ENCODE measurements at regions of chr6 and their contacts with region 1.

Region 1: DNA sequence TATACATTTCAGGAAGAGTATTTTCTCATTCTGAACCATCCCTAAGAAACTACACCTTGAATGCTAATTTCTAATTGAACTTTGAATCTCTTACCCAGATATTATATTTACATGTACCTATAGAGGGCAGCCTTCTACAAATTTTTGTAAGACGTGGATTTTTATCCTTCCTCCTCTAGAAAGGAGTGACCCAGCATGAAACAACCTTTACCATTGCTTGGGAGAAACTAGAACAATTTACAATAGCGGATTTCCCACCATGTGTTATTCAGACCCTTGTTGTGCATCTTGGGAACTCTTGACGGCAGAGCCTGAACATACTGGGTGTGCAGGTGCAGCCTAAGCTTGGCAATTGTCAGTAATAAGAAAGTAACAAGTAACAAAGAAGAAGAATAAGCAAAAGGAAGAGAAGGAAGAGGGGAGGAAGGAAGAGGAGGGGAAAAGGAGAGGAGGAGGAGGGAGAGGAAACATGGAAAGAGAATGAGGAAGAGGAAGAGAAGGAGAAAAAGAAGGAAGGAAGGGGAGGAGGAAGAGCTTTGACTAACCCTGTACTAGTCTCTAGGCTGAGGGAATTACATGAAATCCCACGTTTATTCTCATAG is 10.8 kb upstream of the TAAR1 start:
- DNase-seq: peak; percentile 38
- ATAC-seq: peak; percentile 92
- H3K4me3 ChIP-seq: no peak overlapping the region
- H3K27ac ChIP-seq: no peak overlapping the region
- H3K4me1 ChIP-seq: peaks cover 0 to 9% of the 10 kb centered on the region in 2 experiments; a peak in 2 of 4 replicates
- H3K27me3 ChIP-seq: no peaks in the 10 kb centered on the region
- CTCF ChIP-seq: peak; percentile 35 to 83 (median 66)
- POLR2A ChIP-seq: no peak
- RAD21 ChIP-seq: peak; percentile 77

Region 2: DNA sequence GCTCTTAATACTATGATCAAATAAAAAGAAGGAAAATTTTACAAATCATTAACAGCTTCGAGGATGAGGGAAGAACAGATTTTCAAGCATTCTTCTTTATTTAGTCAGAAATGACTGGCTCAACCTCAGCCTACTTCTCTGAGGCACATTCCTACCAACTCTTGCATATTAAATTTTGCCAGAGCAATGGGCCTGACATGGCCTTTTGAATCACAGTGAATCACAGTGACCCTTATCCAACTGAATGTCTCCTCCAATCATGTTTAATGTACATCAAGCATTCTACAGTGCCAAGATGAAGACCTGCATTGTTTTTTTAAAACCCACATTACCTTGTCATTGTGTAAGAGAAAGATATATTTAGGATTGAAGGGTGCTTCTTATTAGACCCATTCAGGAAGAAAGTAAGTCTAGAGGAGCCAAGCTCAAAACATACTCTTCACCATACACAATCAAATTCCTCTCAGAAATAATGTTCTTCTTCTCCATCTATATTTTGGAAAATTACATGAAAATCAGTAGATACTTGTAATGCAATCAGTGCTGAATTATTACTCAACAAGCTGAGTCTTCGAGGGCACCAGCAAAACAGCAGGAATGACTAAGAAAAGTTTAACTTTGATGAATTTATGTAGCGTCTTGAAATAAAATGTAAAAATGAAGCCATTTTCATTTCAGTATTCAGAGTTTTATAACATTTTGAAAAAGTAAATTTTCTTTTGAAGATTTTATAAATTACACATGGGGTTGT is 224.4 kb before region 1 on chr6:
- CTCF ChIA-PET with region 1: no interaction called
- POLR2A ChIA-PET with region 1: no interaction called
- RAD21 ChIA-PET with region 1: no interaction called
- intact Hi-C with region 1: no loop called
- DNase-seq: no peak
- ATAC-seq: no peak
- H3K4me3 ChIP-seq: no peak overlapping the region
- H3K27ac ChIP-seq: no peak overlapping the region
- H3K4me1 ChIP-seq: no peaks in the 10 kb centered on the region
- H3K27me3 ChIP-seq: no peaks in the 10 kb centered on the region
- CTCF ChIP-seq: no peak
- POLR2A ChIP-seq: no peak
- RAD21 ChIP-seq: no peak

Region 3: DNA sequence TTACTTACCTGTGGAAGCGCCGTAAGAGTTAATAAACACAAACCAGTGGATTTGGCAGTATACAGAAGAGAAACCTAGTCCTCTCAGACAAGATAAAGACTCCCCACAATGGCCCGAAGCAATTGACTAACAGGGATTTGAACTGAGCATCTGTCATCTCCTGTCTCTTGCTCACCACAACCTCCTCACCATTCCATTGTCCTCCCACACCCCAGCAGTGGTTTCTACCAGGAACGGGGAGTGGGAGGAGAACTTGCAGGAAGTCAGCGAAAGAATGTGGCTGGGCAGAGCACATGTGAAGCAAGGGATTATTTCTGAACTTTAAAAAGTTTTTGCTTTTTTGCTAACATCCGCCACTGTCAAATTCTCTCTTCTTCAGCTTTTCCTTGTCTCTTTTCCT is 13.8 kb after region 1 on chr6:
- CTCF ChIA-PET with region 1: no interaction called
- POLR2A ChIA-PET with region 1: no interaction called
- RAD21 ChIA-PET with region 1: no interaction called
- intact Hi-C with region 1: no loop called
- DNase-seq: no peak
- ATAC-seq: no peak
- H3K4me3 ChIP-seq: no peak overlapping the region
- H3K27ac ChIP-seq: no peak overlapping the region
- H3K4me1 ChIP-seq: peaks cover 0 to 6% of the 10 kb centered on the region in 2 experiments; a peak in 1 of 4 replicates
- H3K27me3 ChIP-seq: no peaks in the 10 kb centered on the region
- CTCF ChIP-seq: no peak
- POLR2A ChIP-seq: no peak
- RAD21 ChIP-seq: no peak

Region 4: GRCh38 chr6:132715204-132715603 is 45.4 kb after region 1 on chr6:
- CTCF ChIA-PET with region 1: interaction called, 4 read pairs
- POLR2A ChIA-PET with region 1: no interaction called
- RAD21 ChIA-PET with region 1: no interaction called
- intact Hi-C with region 1: loop called (anchors 1 kb)
- DNase-seq: peak; percentile 49
- ATAC-seq: peak; percentile 100
- H3K4me3 ChIP-seq: no peak overlapping the region
- H3K27ac ChIP-seq: no peak overlapping the region
- H3K4me1 ChIP-seq: no peaks in the 10 kb centered on the region; a peak in 1 of 4 replicates
- H3K27me3 ChIP-seq: no peaks in the 10 kb centered on the region
- CTCF ChIP-seq: peak; percentile 19 to 49 (median 44); a peak in 4 of 6 replicates
- POLR2A ChIP-seq: no peak
- RAD21 ChIP-seq: peak; percentile 77

Region 5: DNA sequence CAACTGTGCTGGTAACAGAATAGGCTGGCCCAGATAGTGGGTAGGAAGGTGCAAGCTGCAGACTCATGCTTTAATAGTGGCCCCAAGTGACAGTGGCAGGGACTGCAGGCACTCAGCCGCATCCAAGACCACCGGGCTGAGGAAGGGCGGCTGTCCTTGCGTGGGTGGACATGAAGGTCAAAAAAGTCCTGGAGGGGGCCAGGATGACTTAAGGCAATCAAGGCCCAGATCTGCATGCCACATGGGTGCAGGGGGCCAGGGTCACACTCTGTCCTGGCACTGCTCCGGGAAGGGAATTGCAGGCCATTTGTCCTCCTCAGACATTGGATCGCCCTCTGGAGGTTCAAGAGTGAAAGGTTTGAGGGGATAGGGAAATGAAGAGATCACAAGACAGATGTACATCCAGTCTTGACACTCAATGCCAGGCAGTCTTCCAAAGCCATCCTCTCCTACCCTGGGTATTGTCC is 98.3 kb after region 1 on chr6:
- CTCF ChIA-PET with region 1: interaction called, 12 read pairs
- POLR2A ChIA-PET with region 1: no interaction called
- RAD21 ChIA-PET with region 1: interaction called in 1 of 2 experiments, 3 read pairs
- intact Hi-C with region 1: loop called (anchors 1 kb)
- DNase-seq: peak; percentile 40
- ATAC-seq: peak; percentile 97
- H3K4me3 ChIP-seq: no peak overlapping the region
- H3K27ac ChIP-seq: no peak overlapping the region
- H3K4me1 ChIP-seq: peaks cover 0 to 5% of the 10 kb centered on the region in 2 experiments; a peak in 2 of 4 replicates
- H3K27me3 ChIP-seq: no peaks in the 10 kb centered on the region
- CTCF ChIP-seq: peak; percentile 63 to 94 (median 73)
- POLR2A ChIP-seq: no peak
- RAD21 ChIP-seq: peak; percentile 67

Region 6: DNA sequence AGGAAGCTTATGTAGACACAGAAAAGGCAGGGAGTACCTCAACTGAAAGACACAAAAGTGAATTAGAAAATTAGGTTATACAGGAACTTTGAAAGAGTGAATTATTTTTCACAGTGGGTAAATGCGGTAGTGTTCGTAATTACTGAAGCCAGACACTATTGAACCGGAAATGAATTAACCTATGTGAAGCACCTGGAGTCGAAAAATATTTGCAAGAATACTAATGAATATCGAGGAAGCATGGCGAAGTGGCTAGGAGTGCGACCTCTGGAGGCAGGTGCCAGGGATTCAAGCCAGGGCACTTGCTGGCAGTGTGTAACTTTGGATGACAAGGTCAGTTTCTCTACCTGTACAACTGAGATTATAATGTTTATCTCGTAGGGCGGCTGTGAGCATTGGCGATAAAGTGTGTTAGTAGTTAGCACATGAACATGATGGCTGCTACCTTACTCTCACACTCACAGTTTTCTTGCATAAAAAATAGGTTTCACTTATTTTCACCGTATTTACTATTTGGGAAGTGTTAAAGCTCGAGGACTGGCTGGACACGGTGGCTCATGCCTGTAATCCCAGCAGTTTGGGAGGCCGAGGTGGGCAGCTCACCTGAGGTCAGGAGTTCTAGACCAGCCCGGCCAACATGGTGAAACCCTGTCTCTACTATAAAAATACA is 129.2 kb after region 1 on chr6:
- CTCF ChIA-PET with region 1: interaction called, 12 read pairs
- POLR2A ChIA-PET with region 1: no interaction called
- RAD21 ChIA-PET with region 1: no interaction called
- intact Hi-C with region 1: no loop called
- DNase-seq: peak; percentile 76
- ATAC-seq: no peak; the same call in 1 of the 2 replicates
- H3K4me3 ChIP-seq: peak overlapping the region in 1 of 2 experiments; percentile 79; a peak in 2 of 4 replicates
- H3K27ac ChIP-seq: no peak overlapping the region; the same call in none of the 2 replicates
- H3K4me1 ChIP-seq: peaks cover 2 to 6% of the 10 kb centered on the region in 2 experiments; a peak in 2 of 4 replicates
- H3K27me3 ChIP-seq: no peaks in the 10 kb centered on the region
- CTCF ChIP-seq: peak; percentile 54 to 89 (median 88); a peak in 5 of 6 replicates
- POLR2A ChIP-seq: no peak
- RAD21 ChIP-seq: peak; percentile 48

Region 7: GRCh38 chr6:132813173-132813856 is 143.5 kb after region 1 on chr6:
- CTCF ChIA-PET with region 1: no interaction called
- POLR2A ChIA-PET with region 1: interaction called, 9 read pairs
- RAD21 ChIA-PET with region 1: no interaction called
- intact Hi-C with region 1: loop called (anchors 1 kb)
- DNase-seq: no peak
- ATAC-seq: peak; percentile 33
- H3K4me3 ChIP-seq: peak overlapping the region; percentile 94 to 95
- H3K27ac ChIP-seq: peak overlapping the region; percentile 93
- H3K4me1 ChIP-seq: peaks cover 9 to 51% of the 10 kb centered on the region in 2 experiments
- H3K27me3 ChIP-seq: no peaks in the 10 kb centered on the region
- CTCF ChIP-seq: no peak
- POLR2A ChIP-seq: no peak
- RAD21 ChIP-seq: no peak

Measured in HCT116 (cell line).